Activated T-helper 1 cell treated with anti-CD3 and anti-CD28 coated beads, Interleukin-12 subunit alpha, Interleukin-12 subunit beta, Interleukin-2, Interleukin-4 antibody, amounts not matched to agents 30 ng/mL and 10 ng/mL and 1 ng/mL, durations not matched to agents 14 hours and 24 hours and 36 hours (primary cell): ENCODE measurements at regions of chr5 and their contacts with region 1.

Region 1: DNA sequence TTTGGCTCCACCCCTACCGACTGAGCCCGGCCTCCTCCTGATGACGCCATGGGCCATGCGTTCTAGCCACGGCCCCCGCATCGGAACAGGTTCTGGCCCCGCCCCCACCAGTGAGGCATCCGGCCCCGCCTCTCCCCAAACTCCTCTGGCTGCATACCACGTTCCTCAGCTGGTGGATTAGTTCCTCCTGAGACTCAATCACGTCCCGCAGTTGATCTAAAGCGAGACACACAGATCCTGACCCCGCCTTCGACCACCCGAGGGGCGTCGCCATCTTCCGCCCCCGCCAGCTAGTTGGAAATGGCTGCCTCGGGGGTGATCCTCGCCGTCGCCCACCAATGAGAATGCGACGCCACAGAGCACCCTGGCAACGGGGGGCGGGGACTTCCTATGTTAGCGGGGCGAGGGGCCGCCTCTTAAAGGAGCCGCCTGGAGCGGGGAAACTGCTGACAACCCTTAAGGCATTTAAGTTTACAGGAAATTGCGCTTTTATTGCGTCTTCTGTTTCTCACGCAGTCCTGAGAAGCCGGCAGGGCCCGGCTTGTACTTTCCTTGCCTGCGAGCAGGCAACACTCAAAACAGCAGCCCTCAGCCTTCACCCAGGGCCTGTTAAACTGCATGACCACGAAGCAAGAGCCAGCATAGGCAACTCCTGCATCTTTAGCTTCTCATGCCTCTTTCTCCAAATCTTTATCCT is at the start of gene SPATA24:
- DNase-seq: peak; percentile 98
- H3K4me3 Mint-ChIP-seq: peak within 1 kb of the TSS; percentile 91
- H3K27ac Mint-ChIP-seq: peak within 1 kb of the TSS; percentile 100
- H3K4me1 Mint-ChIP-seq: peaks cover 47% of the 10 kb centered on the region
- H3K27me3 Mint-ChIP-seq: no peaks in the 10 kb centered on the region
- total RNA-seq, gene SPATA24: 4.1 and 5.3 TPM in 2 replicates

Region 2: GRCh38 chr5:138331449-138332368 is 1072.2 kb before region 1 on chr5 and contains the start of gene CDC25C:
- intact Hi-C with region 1: loop called (anchors 5 kb)
- DNase-seq: peak; percentile 97
- H3K4me3 Mint-ChIP-seq: peak within 1 kb of the TSS; percentile 85
- H3K27ac Mint-ChIP-seq: peak within 1 kb of the TSS; percentile 82
- H3K4me1 Mint-ChIP-seq: peaks cover 24% of the 10 kb centered on the region
- H3K27me3 Mint-ChIP-seq: no peaks in the 10 kb centered on the region
- total RNA-seq, gene CDC25C: 5.3 and 5.6 TPM in 2 replicates

Region 3: DNA sequence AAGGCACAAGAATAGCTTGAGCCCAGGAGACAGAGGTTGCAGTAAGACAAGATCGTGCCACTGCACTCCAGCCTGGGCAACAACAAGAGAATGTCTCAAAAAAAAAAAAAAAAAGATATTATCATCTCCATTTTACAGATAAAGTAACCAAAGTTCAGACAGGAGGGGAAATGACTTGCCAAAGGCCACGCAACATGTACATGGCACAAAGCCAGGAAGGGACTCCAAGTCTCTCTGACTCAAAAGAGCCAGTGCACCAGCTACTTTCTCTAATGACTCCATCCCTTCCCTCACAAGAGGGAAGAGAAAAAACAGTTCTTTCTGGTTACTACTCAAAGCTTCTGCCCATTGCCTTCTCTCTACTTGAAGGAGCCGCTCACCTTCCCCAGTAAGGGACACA is 239.9 kb before region 1 on chr5:
- intact Hi-C with region 1: no loop called
- DNase-seq: no peak
- H3K4me3 Mint-ChIP-seq: no peak overlapping the region
- H3K27ac Mint-ChIP-seq: no peak overlapping the region
- H3K4me1 Mint-ChIP-seq: peaks cover 2% of the 10 kb centered on the region
- H3K27me3 Mint-ChIP-seq: peaks cover 2% of the 10 kb centered on the region

Region 4: DNA sequence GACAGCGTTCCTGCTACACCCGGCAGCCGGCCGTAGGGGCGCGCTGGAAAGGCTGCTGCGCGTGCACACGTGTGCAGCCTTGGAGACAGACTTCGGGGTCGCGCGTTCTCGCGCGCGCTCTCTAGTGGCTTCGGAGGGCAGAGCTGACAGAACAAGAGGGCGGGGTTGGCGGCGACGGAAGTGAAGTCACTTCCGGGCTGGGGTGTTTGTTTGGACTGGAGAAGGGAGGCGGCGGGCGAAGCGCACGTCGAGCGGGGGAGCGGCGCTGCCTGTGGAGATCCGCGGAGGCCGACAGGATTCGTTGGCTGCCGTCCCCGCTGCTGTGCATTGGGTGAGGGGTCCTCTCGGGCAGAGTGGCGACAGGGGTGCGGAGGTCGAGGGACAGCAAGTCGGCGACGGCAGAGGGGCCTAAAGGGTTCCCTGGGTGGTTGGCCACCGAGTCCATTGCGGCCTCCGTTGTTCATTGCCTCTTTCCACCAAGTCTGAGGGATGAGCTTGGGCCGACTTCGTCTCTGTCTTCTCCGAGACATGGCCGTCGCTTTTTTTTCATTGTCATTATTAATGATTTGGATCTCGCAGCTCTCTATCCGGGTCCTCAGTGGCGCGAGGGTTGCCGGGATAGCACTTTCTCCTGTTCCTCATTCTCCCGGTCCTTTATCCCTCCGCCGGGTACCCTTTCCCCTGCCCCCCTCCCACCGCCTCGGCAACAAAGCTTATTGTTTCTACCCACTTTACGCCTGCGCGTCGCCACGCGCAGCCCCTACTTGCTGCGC is 62.1 kb before region 1 on chr5 and contains the start of gene PAIP2:
- intact Hi-C with region 1: loop called (anchors 1 kb)
- DNase-seq: peak; percentile 95
- H3K4me3 Mint-ChIP-seq: peak within 1 kb of the TSS; percentile 94
- H3K27ac Mint-ChIP-seq: peak within 1 kb of the TSS; percentile 95
- H3K4me1 Mint-ChIP-seq: peaks cover 46% of the 10 kb centered on the region
- H3K27me3 Mint-ChIP-seq: no peaks in the 10 kb centered on the region
- total RNA-seq, gene PAIP2: 88.4 and 97.3 TPM in 2 replicates

Region 5: DNA sequence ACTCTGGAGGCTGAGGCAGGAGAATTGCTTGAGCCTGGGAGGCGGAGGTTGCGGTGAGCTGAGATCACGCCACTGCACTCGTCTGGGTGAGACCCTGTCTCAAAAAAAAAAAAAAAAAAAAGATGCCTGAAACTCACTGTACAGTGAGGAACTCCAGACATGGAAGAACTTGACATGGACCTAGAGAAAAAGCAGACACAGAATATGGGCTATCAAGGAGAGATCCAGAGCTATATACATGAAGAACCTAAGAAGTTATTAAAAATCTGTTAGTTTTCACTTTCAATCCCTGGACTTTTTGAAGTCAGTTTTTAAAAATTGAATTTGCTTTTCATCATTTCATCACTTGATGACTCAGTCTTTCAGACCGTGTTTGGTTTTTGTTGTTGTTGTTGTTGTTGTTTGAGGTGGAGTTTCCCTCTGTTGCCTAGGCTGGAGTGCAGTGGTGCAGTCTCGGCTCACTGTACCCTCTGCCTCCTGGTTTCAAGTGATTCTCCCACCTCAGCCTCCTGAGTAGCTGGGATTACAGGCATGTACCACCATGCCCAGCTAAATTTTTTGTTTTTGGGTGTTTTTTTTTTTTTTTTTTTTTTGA is 42.0 kb before region 1 on chr5:
- intact Hi-C with region 1: no loop called
- DNase-seq: no peak
- H3K4me3 Mint-ChIP-seq: no peak overlapping the region
- H3K27ac Mint-ChIP-seq: peak overlapping the region; percentile 55
- H3K4me1 Mint-ChIP-seq: no peaks in the 10 kb centered on the region
- H3K27me3 Mint-ChIP-seq: no peaks in the 10 kb centered on the region

Region 6: DNA sequence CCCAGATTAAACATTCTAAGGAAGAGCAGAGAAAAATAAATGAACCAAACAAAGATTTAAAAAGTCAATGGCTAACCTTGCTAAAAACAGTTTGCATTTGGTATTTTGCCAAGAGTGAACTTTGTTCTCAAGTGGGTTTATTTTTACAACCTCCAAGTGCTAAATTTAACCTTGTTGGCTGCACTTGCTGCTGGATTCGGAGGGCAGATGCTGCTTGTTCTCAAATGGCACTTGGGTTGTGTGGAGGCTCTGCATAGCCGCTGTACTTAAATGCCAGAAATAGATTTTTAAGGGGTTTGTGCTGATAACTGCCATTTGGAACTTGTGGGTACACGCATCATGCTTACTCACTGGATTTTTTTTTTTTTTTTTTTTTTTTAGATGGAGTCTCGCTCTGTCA is 13.3 kb after region 1 on chr5:
- intact Hi-C with region 1: loop called (anchors 1 kb)
- DNase-seq: no peak
- H3K4me3 Mint-ChIP-seq: no peak overlapping the region
- H3K27ac Mint-ChIP-seq: peak overlapping the region; percentile 94
- H3K4me1 Mint-ChIP-seq: peaks cover 61% of the 10 kb centered on the region
- H3K27me3 Mint-ChIP-seq: no peaks in the 10 kb centered on the region

Region 7: GRCh38 chr5:139439013-139439903 is 35.3 kb after region 1 on chr5 and contains the start of gene DNAJC18:
- intact Hi-C with region 1: loop called (anchors 1 kb)
- DNase-seq: peak; percentile 86
- H3K4me3 Mint-ChIP-seq: peak within 1 kb of the TSS; percentile 95
- H3K27ac Mint-ChIP-seq: peak within 1 kb of the TSS; percentile 99
- H3K4me1 Mint-ChIP-seq: peaks cover 66% of the 10 kb centered on the region
- H3K27me3 Mint-ChIP-seq: no peaks in the 10 kb centered on the region
- total RNA-seq, gene DNAJC18: 30.0 and 36.3 TPM in 2 replicates

Region 8: DNA sequence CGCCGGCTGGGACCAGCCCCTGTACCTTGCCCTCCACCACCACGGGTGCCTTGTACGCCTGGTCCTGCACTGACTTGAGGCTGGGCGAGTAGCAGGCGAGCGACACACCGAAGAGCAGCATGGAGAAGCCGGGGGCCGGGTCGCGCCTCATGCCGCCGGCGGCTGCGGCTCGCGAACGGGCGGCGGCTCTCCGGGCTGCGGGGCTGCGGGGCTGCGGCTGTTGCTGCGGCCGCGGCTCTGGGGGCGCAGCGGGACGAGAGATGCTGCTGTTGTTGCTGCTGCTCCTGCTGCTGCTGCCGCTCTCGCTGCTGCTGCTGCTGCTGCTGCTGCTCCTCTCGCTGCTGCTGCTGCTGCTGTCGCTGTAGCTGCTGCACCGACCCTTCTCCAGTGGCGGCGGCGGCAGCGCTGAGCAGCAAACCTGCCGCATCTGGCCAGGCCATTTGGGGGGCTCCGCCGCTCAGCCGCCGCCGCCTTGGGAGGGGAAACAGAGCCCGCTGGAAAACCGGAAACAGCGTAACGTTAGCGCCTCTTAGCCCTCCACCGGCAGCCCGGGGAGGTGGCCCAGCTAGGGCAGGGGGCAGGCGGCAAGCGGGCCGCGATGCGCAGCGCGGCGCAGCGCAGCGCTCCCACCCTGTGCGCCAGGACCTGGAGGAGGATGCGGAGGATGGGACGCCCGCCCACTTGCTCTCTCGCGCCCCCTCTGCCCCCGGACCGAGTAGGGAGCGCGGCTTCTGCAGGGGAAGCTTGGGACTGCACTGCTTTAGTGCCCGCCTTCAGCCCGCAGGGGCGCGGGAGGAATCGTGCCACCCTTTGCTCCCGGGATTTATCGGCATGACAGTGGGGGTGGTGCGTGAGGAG is 638.9 kb after region 1 on chr5 and contains the start of gene NRG2:
- intact Hi-C with region 1: no loop called
- DNase-seq: peak; percentile 11
- H3K4me3 Mint-ChIP-seq: peak within 1 kb of the TSS; percentile 69
- H3K27ac Mint-ChIP-seq: no peak within 1 kb of the TSS
- H3K4me1 Mint-ChIP-seq: peaks cover 15% of the 10 kb centered on the region
- H3K27me3 Mint-ChIP-seq: peaks cover 63% of the 10 kb centered on the region
- total RNA-seq, gene NRG2: 0.08 TPM in 1 of 2 replicates, not detected in the other